HEK293T (cell line): ENCODE measurements at regions of chr4 and their contacts with region 1.

Region 1: DNA sequence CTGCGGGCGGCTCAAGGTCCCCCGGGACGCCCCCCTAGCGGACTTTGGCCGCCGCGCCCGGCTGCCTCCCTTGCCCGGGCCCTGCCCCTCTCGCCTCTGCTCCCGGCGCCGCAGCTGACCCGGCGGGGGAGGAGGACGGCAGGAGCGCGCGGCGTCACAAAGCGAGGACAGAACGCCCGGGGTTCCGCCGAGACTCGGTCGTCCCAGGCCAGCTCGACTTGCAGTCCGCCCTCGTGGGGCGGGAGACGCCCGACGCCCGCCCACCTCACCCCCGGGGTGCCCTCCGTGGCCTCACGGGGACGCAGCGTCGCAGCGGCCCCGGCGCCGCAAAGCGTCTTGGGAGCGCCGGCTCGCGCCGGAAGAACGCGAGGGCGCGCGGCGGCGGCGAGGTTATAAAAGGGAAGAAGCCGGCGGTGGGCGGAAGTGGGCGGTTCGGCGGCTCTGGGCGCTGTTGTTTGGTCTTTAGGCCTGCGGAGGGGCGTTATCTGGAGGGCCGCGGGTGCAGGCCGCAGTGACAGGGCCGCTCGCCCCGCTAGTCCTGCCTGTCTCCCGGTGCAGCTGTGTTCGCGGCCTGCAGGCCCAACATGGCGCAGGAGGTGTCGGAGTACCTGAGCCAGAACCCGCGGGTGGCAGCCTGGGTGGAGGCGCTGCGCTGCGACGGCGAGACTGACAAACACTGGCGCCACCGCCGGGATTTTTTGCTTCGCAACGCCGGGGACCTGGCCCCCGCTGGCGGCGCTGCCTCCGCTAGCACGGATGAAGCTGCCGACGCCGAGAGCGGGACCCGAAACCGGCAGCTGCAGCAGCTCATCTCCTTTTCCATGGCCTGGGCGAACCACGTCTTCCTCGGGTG is at the start of gene CDKN2AIP:
- DNase-seq: peak; percentile 75

Region 2: DNA sequence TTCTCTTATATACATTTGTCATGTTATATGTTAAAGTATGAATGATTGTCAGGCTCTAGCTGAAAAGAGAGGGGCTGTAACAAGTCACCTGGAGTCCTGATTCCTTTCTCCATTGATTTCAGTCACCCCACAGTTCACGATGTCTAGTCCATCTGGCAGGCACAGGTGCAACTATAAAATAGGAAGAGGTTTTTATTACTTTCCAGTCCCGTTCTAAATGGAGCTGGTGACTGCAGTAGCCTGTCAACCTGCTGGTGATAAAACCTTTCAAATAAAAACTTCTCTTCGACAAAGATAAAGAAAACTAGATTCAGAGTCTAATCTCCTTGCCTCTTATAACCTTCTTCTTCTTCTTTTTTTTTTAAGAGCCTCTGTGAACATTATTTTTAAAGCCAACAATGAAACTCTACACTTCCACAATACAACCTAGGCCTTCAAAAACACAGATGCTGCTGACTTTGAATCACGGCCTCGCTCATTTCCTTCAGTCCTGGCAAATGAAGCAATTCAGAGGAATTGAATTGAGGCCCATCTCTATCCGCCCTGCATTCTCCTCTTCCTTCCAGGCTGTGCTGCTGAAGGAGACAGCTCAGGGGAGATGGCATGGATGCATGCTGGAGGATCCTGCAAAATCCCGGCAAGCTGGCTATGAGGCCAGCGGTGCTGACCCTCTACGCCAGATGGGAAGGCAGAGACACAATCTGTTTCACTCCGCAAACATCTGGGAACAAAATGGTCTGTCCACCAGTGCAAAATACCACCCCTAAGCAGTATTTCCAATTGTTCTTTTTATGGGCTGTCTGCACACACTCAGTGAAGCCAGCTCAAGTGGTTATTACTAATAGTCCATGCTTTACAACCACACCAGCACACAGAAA is 27.3 kb before region 1 on chr4:
- CTCF ChIA-PET with region 1: no interaction called
- POLR2A ChIA-PET with region 1: interaction called, 10 read pairs
- DNase-seq: no peak